Adrenal gland (tissue), 19 donors: ENCODE measurements at regions of chr2 and their contacts with region 1.

Region 1: DNA sequence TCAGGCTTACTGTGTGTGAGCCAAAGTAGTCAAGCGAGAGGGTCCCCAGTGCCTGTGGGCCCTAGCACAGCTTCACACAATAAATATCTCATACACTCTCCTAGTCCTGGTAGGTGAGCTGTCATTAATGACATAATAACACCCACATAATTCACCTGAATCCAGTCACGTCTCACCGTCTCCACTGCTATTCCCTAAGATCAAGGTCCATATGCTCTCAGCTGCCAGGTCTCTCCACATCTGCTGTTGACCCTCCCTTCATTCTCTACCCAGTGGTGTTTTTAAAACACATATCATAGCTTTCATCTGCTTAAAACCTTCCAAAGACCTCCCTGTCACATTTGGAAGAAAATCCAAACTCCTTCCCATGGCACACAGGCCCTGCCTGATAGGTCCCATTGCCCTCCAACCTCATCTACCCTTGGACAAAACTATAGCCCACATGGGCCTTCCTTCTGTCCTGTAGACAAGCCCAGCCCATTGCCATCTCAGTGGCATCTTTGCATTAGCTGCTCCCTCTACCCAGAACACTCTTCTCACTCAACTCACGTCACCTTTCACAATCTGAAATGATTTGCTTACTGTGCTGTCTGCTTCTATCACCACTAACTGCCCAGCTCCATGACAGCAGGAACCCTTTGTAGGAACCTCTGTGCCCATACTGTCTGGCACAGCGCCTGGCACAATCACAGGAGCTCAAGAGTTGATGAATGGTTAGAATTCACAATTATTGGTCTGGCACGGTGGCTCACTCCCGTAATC is 7.5 kb downstream of the KCNG3 start:
- DNase-seq: no peak
- H3K4me3 ChIP-seq: no peak overlapping the region
- H3K27ac ChIP-seq: no peak overlapping the region
- H3K4me1 ChIP-seq: no peaks in the 10 kb centered on the region
- H3K27me3 ChIP-seq: no peaks in the 10 kb centered on the region
- CTCF ChIP-seq: no peak
- POLR2A ChIP-seq: no peak

Region 2: GRCh38 chr2:42371611-42372473 is 114.5 kb before region 1 on chr2:
- intact Hi-C with region 1: loop called in 1 of 2 experiments (anchors 10 kb)
- DNase-seq: peak in 6 of 7 donors; percentile 31 to 59 (median 44)
- H3K4me3 ChIP-seq: no peak overlapping the region
- H3K27ac ChIP-seq: peak overlapping the region in 3 of 5 donors; percentile 57 to 68 (median 63)
- H3K4me1 ChIP-seq: peaks cover 8 to 10% of the 10 kb centered on the region in 2 donors
- H3K27me3 ChIP-seq: no peaks in the 10 kb centered on the region
- CTCF ChIP-seq: no peak
- POLR2A ChIP-seq: no peak